Caco-2 (cell line): ENCODE measurements at regions of chr16 and their contacts with region 1.

Region 1: DNA sequence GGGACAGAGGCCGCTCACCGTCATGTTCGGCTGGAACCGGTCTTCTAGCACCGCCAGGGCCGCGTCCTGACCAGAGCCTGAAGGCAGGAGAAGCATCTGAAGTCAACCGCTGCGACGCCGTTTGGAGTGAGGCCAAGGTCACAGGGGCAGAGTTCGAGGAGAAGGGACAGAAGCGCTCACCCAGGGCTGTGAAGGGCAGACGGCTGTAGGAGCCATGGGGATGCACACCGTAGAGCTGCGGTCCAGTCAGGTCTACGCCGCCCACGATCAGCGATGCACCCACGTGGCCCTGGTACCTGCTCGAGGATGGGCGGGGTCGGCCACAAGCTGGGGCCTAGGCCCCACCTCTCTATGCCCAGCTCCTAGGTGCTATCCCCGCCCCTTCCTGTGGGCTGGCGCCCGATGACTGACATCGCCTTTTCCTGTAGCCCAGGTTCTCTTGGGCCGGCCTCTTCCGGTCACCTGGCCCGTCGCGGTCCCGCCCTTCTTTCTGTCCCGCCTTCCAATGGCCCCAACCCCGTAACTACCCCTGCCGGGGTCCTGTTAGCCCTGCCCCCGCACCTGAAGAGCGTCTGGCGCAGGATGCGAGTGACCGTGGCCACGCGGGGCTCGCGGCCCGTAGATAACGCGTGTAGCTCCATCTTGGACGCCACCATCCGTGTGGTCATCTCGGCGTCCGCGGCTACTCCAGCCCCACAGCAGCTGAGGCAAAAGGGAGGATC is 1.1 kb downstream of the PSMB10 start:
- DNase-seq: peak; percentile 99
- H3K4me3 ChIP-seq: peak overlapping the region; percentile 87
- H3K4me3 Mint-ChIP-seq: peak overlapping the region; percentile 97
- H3K27ac Mint-ChIP-seq: peak overlapping the region; percentile 95
- H3K4me1 ChIP-seq: peaks cover 16% of the 10 kb centered on the region
- H3K4me1 Mint-ChIP-seq: peaks cover 28% of the 10 kb centered on the region
- H3K27me3 ChIP-seq: no peaks in the 10 kb centered on the region
- H3K27me3 Mint-ChIP-seq: no peaks in the 10 kb centered on the region
- CTCF ChIP-seq: no peak

Region 2: GRCh38 chr16:67561824-67562525 is 373.6 kb before region 1 on chr16:
- CTCF ChIA-PET with region 1: no interaction called
- POLR2A ChIA-PET with region 1: interaction called, 5 read pairs
- intact Hi-C with region 1: loop called (anchors 5 kb)
- DNase-seq: peak; percentile 99
- H3K4me3 ChIP-seq: peak overlapping the region; percentile 100
- H3K4me3 Mint-ChIP-seq: peak overlapping the region; percentile 95
- H3K27ac Mint-ChIP-seq: peak overlapping the region; percentile 93
- H3K4me1 ChIP-seq: peaks cover 14% of the 10 kb centered on the region
- H3K4me1 Mint-ChIP-seq: peaks cover 23% of the 10 kb centered on the region
- H3K27me3 ChIP-seq: no peaks in the 10 kb centered on the region
- H3K27me3 Mint-ChIP-seq: no peaks in the 10 kb centered on the region
- CTCF ChIP-seq: no peak

Region 3: GRCh38 chr16:67816240-67817031 is 119.1 kb before region 1 on chr16:
- CTCF ChIA-PET with region 1: interaction called, 16 read pairs
- POLR2A ChIA-PET with region 1: no interaction called
- intact Hi-C with region 1: no loop called
- DNase-seq: peak; percentile 85 to 95
- H3K4me3 ChIP-seq: no peak overlapping the region
- H3K4me3 Mint-ChIP-seq: no peak overlapping the region
- H3K27ac Mint-ChIP-seq: no peak overlapping the region
- H3K4me1 ChIP-seq: no peaks in the 10 kb centered on the region
- H3K4me1 Mint-ChIP-seq: no peaks in the 10 kb centered on the region
- H3K27me3 ChIP-seq: no peaks in the 10 kb centered on the region
- H3K27me3 Mint-ChIP-seq: no peaks in the 10 kb centered on the region
- CTCF ChIP-seq: peak; percentile 100

Region 4: DNA sequence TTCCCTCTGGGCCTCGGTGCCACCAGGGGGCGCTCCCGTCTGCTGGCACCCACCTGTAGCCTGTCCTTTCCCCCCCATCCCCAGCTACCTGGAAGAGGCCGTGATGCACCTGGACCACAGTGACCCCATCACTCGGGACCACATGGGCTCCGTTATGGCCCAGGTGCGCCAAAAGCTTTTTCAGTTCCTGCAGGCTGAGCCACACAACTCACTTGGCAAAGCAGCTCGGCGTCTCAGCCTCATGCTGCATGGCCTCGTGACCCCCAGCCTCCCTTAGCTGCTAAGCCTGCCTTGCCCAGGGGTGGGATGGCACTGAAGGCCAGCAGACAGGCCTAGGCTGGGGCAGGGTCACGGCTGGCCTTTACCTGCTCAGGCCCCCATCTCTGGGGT is 51.7 kb before region 1 on chr16:
- CTCF ChIA-PET with region 1: interaction called, 47 read pairs
- POLR2A ChIA-PET with region 1: interaction called, 9 read pairs
- intact Hi-C with region 1: no loop called
- DNase-seq: peak; percentile 68 to 87
- H3K4me3 ChIP-seq: no peak overlapping the region
- H3K4me3 Mint-ChIP-seq: peak overlapping the region; percentile 61
- H3K27ac Mint-ChIP-seq: peak overlapping the region; percentile 96
- H3K4me1 ChIP-seq: peaks cover 43% of the 10 kb centered on the region
- H3K4me1 Mint-ChIP-seq: peaks cover 37% of the 10 kb centered on the region
- H3K27me3 ChIP-seq: no peaks in the 10 kb centered on the region
- H3K27me3 Mint-ChIP-seq: no peaks in the 10 kb centered on the region
- CTCF ChIP-seq: peak; percentile 89 to 92

Region 5: DNA sequence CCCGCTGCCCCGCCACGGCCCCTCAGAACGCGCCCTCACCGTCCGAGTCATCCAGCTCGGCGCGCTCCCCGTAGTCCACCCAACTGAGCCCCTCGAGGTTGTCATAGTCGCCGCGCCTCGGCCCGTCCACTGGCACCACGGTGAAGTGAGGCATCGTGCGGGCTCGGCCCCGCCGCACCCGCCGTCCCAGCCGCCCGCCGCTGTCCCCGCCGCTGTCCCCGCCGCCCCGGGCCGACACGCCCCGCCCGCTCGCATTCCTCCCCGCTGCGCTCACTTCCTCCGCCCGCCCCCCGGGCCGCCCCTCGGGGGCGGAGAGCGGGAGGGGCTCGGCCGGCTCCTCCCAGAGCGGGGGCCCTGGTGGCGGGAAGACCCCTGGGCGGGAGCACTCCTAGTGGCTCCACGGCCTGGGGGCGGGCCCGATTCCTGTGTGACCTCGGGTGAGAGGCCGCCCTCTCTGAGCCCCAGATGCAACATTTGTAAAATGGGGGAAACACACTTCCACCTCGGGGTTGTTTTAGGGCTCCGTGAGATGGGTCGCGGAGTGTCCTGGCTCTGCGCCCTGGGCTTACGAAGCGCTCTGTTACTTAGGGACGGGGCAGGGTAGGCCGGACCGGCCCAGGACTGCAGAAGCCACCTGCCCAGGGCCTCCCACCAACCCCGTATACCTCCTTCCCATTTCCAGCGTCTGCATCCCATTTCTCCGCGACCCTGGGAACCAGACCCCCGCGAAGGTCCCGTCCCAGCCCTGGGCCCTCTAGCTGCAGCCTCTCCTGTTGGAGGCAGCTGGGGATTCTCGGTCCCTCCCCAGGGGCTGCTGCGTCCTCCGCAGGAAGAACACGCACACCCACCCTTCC is 33.1 kb after region 1 on chr16 and contains the start of gene SLC12A4:
- CTCF ChIA-PET with region 1: interaction called, 3 read pairs
- POLR2A ChIA-PET with region 1: interaction called, 9 read pairs
- intact Hi-C with region 1: loop called (anchors 1 kb)
- DNase-seq: peak; percentile 90 to 94
- H3K4me3 ChIP-seq: peak within 1 kb of the TSS; percentile 66
- H3K4me3 Mint-ChIP-seq: peak within 1 kb of the TSS; percentile 89
- H3K27ac Mint-ChIP-seq: peak within 1 kb of the TSS; percentile 93
- H3K4me1 ChIP-seq: peaks cover 29% of the 10 kb centered on the region
- H3K4me1 Mint-ChIP-seq: peaks cover 35% of the 10 kb centered on the region
- H3K27me3 ChIP-seq: no peaks in the 10 kb centered on the region
- H3K27me3 Mint-ChIP-seq: no peaks in the 10 kb centered on the region
- CTCF ChIP-seq: no peak
- total RNA-seq, gene SLC12A4: 97.0 and 107 TPM in 2 replicates

Region 6: GRCh38 chr16:68064791-68065365 is 129.3 kb after region 1 on chr16:
- CTCF ChIA-PET with region 1: interaction called, 5 read pairs
- POLR2A ChIA-PET with region 1: interaction called, 11 read pairs
- intact Hi-C with region 1: no loop called
- DNase-seq: peak; percentile 90 to 91
- H3K4me3 ChIP-seq: no peak overlapping the region
- H3K4me3 Mint-ChIP-seq: peak overlapping the region; percentile 21
- H3K27ac Mint-ChIP-seq: peak overlapping the region; percentile 49
- H3K4me1 ChIP-seq: peaks cover 22% of the 10 kb centered on the region
- H3K4me1 Mint-ChIP-seq: peaks cover 25% of the 10 kb centered on the region
- H3K27me3 ChIP-seq: no peaks in the 10 kb centered on the region
- H3K27me3 Mint-ChIP-seq: no peaks in the 10 kb centered on the region
- CTCF ChIP-seq: peak; percentile 91 to 96

Region 7: DNA sequence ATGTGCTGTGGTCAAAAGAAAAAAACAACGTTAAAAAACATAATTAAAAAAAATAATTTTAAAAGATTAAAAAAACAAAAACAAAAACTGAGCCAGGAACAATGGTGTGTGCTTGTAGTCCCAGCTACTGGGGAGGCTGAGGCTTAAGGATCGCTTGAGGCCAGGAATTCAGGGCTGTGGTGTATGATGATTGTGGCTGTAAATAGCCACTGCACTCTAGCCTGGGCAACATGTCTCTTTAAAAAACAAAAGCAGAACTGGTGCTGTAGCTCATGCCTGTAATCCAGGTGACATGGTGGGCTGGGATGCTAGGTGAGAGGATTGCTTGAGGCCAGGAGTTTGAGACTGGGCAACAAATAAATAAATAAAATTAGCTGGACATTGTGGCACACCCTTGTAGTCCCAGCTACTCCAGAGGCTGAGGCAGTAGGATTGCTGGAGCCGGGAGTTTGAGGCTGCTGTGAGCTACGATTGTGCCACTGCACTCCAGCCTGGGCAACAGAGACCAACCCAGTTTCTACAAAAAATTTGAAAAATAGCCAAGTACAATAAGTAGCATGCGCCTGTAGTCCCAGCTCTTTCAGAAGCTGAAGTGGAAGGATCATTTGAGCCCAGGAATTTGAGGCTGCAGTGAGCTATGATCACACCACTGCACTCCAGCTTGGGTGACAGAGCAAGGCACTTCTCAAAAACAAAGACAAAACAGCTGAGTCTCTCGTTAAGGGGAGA is 193.2 kb after region 1 on chr16:
- CTCF ChIA-PET with region 1: no interaction called
- POLR2A ChIA-PET with region 1: no interaction called
- intact Hi-C with region 1: no loop called
- DNase-seq: no peak
- H3K4me3 ChIP-seq: no peak overlapping the region
- H3K4me3 Mint-ChIP-seq: no peak overlapping the region
- H3K27ac Mint-ChIP-seq: no peak overlapping the region
- H3K4me1 ChIP-seq: no peaks in the 10 kb centered on the region
- H3K4me1 Mint-ChIP-seq: no peaks in the 10 kb centered on the region
- H3K27me3 ChIP-seq: no peaks in the 10 kb centered on the region
- H3K27me3 Mint-ChIP-seq: no peaks in the 10 kb centered on the region
- CTCF ChIP-seq: no peak